Esophagus muscularis mucosa (tissue), 4 donors: ENCODE measurements at regions of chr2 and their contacts with region 1.

Region 1: DNA sequence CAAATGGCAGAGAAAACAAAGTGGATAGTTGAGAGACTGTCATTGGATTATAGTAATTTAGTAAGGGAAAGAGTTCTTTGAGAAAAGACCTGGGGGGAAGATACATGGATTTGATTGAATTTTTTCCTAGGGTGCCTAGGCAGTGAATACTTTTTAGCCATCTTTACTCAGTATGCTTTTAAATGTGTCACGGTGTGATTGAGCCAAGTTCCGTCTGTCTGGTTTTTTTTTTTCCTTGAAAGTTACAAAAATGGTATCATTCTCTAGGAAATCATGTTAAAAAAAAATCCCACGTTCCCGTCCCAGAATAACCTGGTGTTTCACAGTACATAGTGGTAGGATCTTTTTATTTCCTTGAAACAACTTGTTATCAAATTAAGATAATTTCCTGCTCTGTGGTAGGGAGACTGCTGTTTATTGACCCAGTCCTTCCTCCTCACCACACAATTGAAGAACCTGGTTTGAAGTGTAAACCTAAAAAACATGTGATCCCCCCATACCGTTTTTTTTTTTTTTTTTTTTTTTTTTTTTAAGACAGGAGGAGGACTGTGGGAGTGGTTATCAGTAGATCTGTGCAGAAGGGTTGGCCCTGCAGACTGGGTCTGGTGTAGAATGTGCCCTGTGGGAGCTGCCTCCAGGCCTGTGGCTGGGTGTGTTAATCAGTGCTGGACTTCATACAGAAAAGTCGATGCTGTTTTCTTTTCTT is 55.1 kb downstream of the DGKD start:
- DNase-seq: no peak
- H3K4me3 ChIP-seq: no peak overlapping the region
- H3K27ac ChIP-seq: peak overlapping the region in 2 of 4 donors; percentile 36 to 53
- H3K4me1 ChIP-seq: peaks cover 20 to 48% (median 43%) of the 10 kb centered on the region in 4 donors
- H3K27me3 ChIP-seq: no peaks in the 10 kb centered on the region
- CTCF ChIP-seq: no peak
- EP300 ChIP-seq: no peak
- POLR2A ChIP-seq: no peak

Region 2: DNA sequence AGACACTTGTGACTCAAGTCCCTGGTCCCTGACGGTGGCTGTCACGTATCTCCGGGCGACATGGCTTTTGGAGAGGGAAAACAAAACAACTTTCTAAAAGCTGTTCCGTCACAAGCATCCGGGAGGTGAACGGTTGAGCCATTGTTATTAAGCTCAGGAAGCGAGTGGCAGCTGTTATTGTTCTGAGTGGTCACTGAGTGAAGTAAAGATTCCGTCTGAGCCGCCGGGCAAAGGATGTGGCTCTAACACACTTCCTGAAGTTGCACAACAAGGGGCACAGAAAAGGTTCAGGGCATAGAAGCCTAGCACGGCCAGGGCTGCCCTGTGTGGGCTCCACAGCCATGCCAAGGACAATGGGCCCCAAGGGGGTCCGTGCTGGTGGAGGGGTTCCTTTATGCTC is 325.0 kb before region 1 on chr2:
- intact Hi-C with region 1: no loop called
- DNase-seq: no peak
- H3K4me3 ChIP-seq: no peak overlapping the region
- H3K27ac ChIP-seq: peak overlapping the region; percentile 50 to 75 (median 71)
- H3K4me1 ChIP-seq: peaks cover 0 to 54% (median 34%) of the 10 kb centered on the region in 4 donors
- H3K27me3 ChIP-seq: peaks cover 0 to 9% (median 0%) of the 10 kb centered on the region in 4 donors
- CTCF ChIP-seq: no peak
- EP300 ChIP-seq: no peak
- POLR2A ChIP-seq: no peak

Region 3: GRCh38 chr2:233380132-233380895 is 29.1 kb before region 1 on chr2:
- intact Hi-C with region 1: no loop called
- DNase-seq: no peak
- H3K4me3 ChIP-seq: no peak overlapping the region
- H3K27ac ChIP-seq: no peak overlapping the region
- H3K4me1 ChIP-seq: peaks cover 5 to 13% (median 9%) of the 10 kb centered on the region in 4 donors
- H3K27me3 ChIP-seq: no peaks in the 10 kb centered on the region
- CTCF ChIP-seq: no peak
- EP300 ChIP-seq: no peak
- POLR2A ChIP-seq: no peak

Region 4: GRCh38 chr2:233443468-233444183 is 34.2 kb after region 1 on chr2:
- intact Hi-C with region 1: loop called (anchors 5 kb)
- DNase-seq: peak; percentile 95
- H3K4me3 ChIP-seq: no peak overlapping the region
- H3K27ac ChIP-seq: peak overlapping the region in 1 of 4 donors; percentile 16
- H3K4me1 ChIP-seq: peaks cover 7 to 16% (median 11%) of the 10 kb centered on the region in 4 donors
- H3K27me3 ChIP-seq: no peaks in the 10 kb centered on the region
- CTCF ChIP-seq: peak; percentile 83 to 85 (median 85)
- EP300 ChIP-seq: no peak
- POLR2A ChIP-seq: no peak